CD4-positive, alpha-beta memory T cell (primary cell): ENCODE measurements at regions of chr22 and their contacts with region 1.

Region 1: GRCh38 chr22:50030297-50031188 is 18.0 kb upstream of the IL17REL start:
- DNase-seq: peak; percentile 81 to 87 (median 84)
- H3K4me3 ChIP-seq: no peak overlapping the region
- H3K4me3 Mint-ChIP-seq: no peak overlapping the region
- H3K27ac ChIP-seq: no peak overlapping the region
- H3K27ac Mint-ChIP-seq: no peak overlapping the region
- H3K4me1 ChIP-seq: peaks cover 18% of the 10 kb centered on the region
- H3K4me1 Mint-ChIP-seq: peaks cover 3 to 15% (median 8%) of the 10 kb centered on the region in 4 donors
- H3K27me3 ChIP-seq: no peaks in the 10 kb centered on the region
- H3K27me3 Mint-ChIP-seq: peaks cover 0 to 8% of the 10 kb centered on the region in 2 donors

Region 2: GRCh38 chr22:49925525-49926128 is 104.9 kb before region 1 on chr22:
- CTCF ChIA-PET with region 1: interaction called, 56 read pairs
- POLR2A ChIA-PET with region 1: interaction called, 18 read pairs
- intact Hi-C with region 1: no loop called
- DNase-seq: peak; percentile 82 to 94 (median 84)
- H3K4me3 ChIP-seq: peak overlapping the region; percentile 26 to 48
- H3K4me3 Mint-ChIP-seq: peak overlapping the region; percentile 75 to 88 (median 84)
- H3K27ac ChIP-seq: peak overlapping the region; percentile 91
- H3K27ac Mint-ChIP-seq: peak overlapping the region; percentile 94 to 100 (median 95)
- H3K4me1 ChIP-seq: peaks cover 27% of the 10 kb centered on the region
- H3K4me1 Mint-ChIP-seq: peaks cover 16 to 48% (median 32%) of the 10 kb centered on the region in 4 donors
- H3K27me3 ChIP-seq: no peaks in the 10 kb centered on the region
- H3K27me3 Mint-ChIP-seq: no peaks in the 10 kb centered on the region

Region 3: GRCh38 chr22:49992921-49993648 is 37.5 kb before region 1 on chr22:
- CTCF ChIA-PET with region 1: interaction called, 28 read pairs
- POLR2A ChIA-PET with region 1: interaction called, 5 read pairs
- intact Hi-C with region 1: loop called (anchors 1 kb)
- DNase-seq: peak; percentile 47 to 69 (median 57)
- H3K4me3 ChIP-seq: no peak overlapping the region
- H3K4me3 Mint-ChIP-seq: peak overlapping the region in 3 of 8 donors; percentile 38 to 64 (median 60)
- H3K27ac ChIP-seq: no peak overlapping the region
- H3K27ac Mint-ChIP-seq: peak overlapping the region in 5 of 7 donors; percentile 15 to 74 (median 50)
- H3K4me1 ChIP-seq: peaks cover 9% of the 10 kb centered on the region
- H3K4me1 Mint-ChIP-seq: peaks cover 3 to 12% (median 6%) of the 10 kb centered on the region in 4 donors
- H3K27me3 ChIP-seq: no peaks in the 10 kb centered on the region
- H3K27me3 Mint-ChIP-seq: peaks cover 4% of the 10 kb centered on the region in 2 donors

Region 4: DNA sequence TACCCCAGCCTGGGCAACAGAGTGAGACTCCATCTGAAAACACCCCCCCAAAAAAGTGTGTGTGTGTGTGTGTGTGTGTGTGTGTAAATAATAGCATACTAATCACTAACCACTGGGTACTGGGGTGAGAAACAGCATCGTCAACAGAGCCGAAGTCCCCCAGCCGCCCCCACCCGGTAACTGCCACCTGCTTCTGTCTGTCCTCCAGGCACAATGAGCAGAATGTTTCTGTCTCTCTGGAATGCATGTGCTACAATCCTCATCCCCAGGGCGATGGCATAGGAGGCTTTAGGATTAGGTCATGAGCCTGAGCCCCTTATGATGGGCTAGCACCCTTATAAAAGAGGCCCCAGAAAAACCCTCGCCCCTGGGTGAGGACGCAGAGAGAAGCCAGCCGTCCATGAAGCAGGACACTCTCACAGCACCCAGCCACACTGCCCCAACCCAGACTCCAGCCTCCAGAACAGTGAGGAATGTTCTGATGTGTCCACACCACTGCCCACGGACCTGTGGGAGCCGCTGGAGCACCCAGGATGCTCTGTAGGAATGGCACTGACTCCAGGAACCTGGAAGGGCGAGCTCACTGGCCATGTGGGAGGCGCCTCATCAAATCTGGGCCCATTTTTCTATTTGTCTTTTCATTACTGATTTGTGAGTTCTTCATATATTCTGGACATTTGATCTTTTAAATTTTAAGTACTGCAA is 17.7 kb after region 1 on chr22:
- CTCF ChIA-PET with region 1: no interaction called
- POLR2A ChIA-PET with region 1: no interaction called
- intact Hi-C with region 1: no loop called
- DNase-seq: no peak
- H3K4me3 ChIP-seq: no peak overlapping the region
- H3K4me3 Mint-ChIP-seq: no peak overlapping the region
- H3K27ac ChIP-seq: no peak overlapping the region
- H3K27ac Mint-ChIP-seq: no peak overlapping the region
- H3K4me1 ChIP-seq: peaks cover 8% of the 10 kb centered on the region
- H3K4me1 Mint-ChIP-seq: peaks cover 5 to 14% (median 8%) of the 10 kb centered on the region in 4 donors
- H3K27me3 ChIP-seq: no peaks in the 10 kb centered on the region
- H3K27me3 Mint-ChIP-seq: peaks cover 9% of the 10 kb centered on the region in 2 donors

Region 5: GRCh38 chr22:50058906-50059880 is 28.6 kb after region 1 on chr22:
- CTCF ChIA-PET with region 1: no interaction called
- POLR2A ChIA-PET with region 1: no interaction called
- intact Hi-C with region 1: no loop called
- DNase-seq: no peak
- H3K4me3 ChIP-seq: no peak overlapping the region
- H3K4me3 Mint-ChIP-seq: no peak overlapping the region
- H3K27ac ChIP-seq: no peak overlapping the region
- H3K27ac Mint-ChIP-seq: no peak overlapping the region
- H3K4me1 ChIP-seq: no peaks in the 10 kb centered on the region
- H3K4me1 Mint-ChIP-seq: no peaks in the 10 kb centered on the region
- H3K27me3 ChIP-seq: peaks cover 5% of the 10 kb centered on the region
- H3K27me3 Mint-ChIP-seq: peaks cover 14 to 30% of the 10 kb centered on the region in 2 donors

Region 6: DNA sequence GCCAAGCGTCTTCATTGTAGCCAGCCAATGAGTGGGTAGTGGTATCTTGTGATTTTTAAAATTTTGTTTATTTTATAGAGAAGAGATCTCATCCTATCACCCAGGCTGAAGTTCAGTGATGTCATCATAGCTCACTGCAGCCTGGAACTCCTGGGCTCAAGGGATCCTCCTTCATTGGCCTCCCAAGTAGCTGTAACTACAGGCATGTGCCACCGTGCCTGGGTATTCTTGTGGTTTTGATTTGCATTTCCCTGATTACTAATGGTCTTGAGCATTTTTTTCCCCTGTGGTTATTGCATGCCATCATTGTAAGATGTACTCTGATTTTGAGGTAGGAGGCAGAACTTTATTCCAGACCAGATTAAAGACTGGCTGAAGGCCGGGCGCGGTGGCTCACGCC is 298.7 kb after region 1 on chr22:
- CTCF ChIA-PET with region 1: no interaction called
- POLR2A ChIA-PET with region 1: no interaction called
- intact Hi-C with region 1: no loop called
- DNase-seq: no peak
- H3K4me3 ChIP-seq: no peak overlapping the region
- H3K4me3 Mint-ChIP-seq: peak overlapping the region in 3 of 8 donors; percentile 3 to 22 (median 5)
- H3K27ac ChIP-seq: no peak overlapping the region
- H3K27ac Mint-ChIP-seq: peak overlapping the region in 2 of 7 donors; percentile 11 to 51
- H3K4me1 ChIP-seq: peaks cover 9% of the 10 kb centered on the region
- H3K4me1 Mint-ChIP-seq: peaks cover 5 to 14% (median 9%) of the 10 kb centered on the region in 4 donors
- H3K27me3 ChIP-seq: no peaks in the 10 kb centered on the region
- H3K27me3 Mint-ChIP-seq: peaks cover 0 to 4% of the 10 kb centered on the region in 2 donors